Gastrocnemius medialis (tissue), 4 donors: ENCODE measurements at regions of chr12 and their contacts with region 1.

Region 1: GRCh38 chr12:85872497-85873091 is 1.5 kb upstream of the NTS start:
- DNase-seq: no peak
- ATAC-seq: no peak
- H3K4me3 ChIP-seq: no peak overlapping the region
- H3K27ac ChIP-seq: no peak overlapping the region
- H3K4me1 ChIP-seq: no peaks in the 10 kb centered on the region
- H3K27me3 ChIP-seq: no peaks in the 10 kb centered on the region
- CTCF ChIP-seq: peak in 4 of 5 experiments; percentile 20 to 59 (median 46)
- POLR2A ChIP-seq: no peak

Region 2: DNA sequence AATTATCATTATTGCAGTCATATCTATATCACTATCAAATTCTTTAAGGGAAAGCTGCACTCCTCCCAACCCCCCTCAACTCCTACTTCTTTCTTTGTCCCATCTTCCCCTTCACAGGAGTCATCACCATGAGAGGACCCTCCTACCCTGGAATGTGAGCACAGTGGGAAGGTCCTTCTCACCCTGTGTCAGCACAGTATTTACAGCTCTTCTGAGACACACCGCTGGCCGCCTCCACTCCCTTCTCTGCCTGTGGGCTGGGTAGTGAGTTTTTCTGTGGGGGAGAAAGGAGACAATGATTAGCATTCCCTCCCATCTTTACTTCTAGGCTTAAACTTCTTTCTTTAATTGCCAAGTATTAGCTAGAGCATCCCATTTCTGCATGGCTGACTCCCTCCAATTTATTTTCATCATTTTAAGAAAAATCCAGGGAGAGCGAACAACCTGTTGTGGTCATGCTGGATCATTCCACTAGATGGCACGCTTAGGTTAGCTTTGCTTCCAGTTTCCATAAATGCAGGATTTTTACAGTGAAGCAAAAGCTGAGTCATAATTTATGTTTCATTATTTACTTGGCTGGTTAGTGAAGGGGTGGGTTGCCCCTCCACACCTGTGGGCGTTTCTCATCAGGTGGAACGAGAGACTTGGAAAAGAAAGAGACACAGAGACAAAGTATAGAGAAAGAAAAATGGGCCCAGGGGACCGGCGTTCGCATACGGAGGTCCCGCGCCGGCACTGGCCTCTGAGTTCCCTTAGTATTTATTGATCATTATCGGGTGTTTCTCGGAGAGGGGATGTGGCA is 404.0 kb before region 1 on chr12:
- in situ Hi-C with region 1: loop called in 1 of 4 experiments (anchors 10 kb)
- intact Hi-C with region 1: loop called (anchors 2 kb)
- DNase-seq: peak in 1 of 2 donors; percentile 9
- ATAC-seq: peak in 1 of 2 donors; percentile 49
- H3K4me3 ChIP-seq: peak overlapping the region; percentile 35 to 60 (median 49)
- H3K27ac ChIP-seq: no peak overlapping the region
- H3K4me1 ChIP-seq: no peaks in the 10 kb centered on the region
- H3K27me3 ChIP-seq: no peaks in the 10 kb centered on the region
- CTCF ChIP-seq: peak; percentile 26 to 65 (median 44)
- POLR2A ChIP-seq: no peak